CD4-positive, alpha-beta memory T cell (primary cell): ENCODE measurements at regions of chr12 and their contacts with region 1.

Region 1: DNA sequence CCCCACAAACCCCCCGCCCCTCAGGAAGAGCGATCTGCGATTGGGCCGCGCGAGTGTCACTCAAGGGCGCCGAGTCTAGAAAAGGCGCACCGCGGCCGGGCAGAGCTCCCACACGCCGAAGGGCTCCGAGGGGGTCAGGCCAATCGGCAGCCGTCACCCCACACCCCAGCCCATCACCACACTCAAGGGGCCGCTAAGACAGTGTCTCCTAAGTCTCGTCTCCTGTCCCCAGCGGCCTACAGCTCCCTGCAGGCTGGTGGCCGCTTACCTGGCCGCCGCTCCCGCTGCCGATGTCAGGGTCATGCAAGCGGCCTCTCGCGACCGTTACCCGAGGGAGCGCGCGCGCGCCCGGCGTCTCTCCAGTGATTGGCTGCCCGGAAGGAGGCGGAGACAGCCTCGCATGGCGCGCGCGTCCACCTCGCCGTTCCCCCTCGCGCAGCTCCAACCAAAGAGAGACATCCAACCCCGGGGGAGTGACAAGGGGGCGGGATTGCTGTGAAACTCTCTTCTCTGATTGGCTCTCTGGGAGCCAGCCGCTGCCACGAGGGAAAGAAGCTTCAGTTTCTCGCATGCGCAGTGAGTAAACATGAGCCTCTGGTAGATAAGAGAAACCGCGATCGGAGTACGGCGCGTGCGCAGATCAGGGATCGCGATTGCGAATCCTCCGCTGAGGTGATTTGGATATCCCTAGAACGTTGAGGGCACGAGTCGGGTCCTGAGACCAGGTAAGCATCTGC is at the starts of genes MPHOSPH9 and MTRFR:
- DNase-seq: peak; percentile 99 to 100 (median 100)
- H3K4me3 ChIP-seq: peak within 1 kb of the TSS; percentile 82 to 99
- H3K4me3 Mint-ChIP-seq: peak within 1 kb of the TSS; percentile 96 to 100 (median 99)
- H3K27ac ChIP-seq: peak within 1 kb of the TSS; percentile 88
- H3K27ac Mint-ChIP-seq: peak within 1 kb of the TSS; percentile 96 to 100 (median 99)
- H3K4me1 ChIP-seq: peaks cover 86% of the 10 kb centered on the region
- H3K4me1 Mint-ChIP-seq: peaks cover 40 to 81% (median 60%) of the 10 kb centered on the region in 4 donors
- H3K27me3 ChIP-seq: no peaks in the 10 kb centered on the region
- H3K27me3 Mint-ChIP-seq: no peaks in the 10 kb centered on the region
- total RNA-seq, gene MPHOSPH9: 57.9 to 62.7 TPM
- total RNA-seq, gene MTRFR: 46.1 to 48.8 TPM

Region 2: DNA sequence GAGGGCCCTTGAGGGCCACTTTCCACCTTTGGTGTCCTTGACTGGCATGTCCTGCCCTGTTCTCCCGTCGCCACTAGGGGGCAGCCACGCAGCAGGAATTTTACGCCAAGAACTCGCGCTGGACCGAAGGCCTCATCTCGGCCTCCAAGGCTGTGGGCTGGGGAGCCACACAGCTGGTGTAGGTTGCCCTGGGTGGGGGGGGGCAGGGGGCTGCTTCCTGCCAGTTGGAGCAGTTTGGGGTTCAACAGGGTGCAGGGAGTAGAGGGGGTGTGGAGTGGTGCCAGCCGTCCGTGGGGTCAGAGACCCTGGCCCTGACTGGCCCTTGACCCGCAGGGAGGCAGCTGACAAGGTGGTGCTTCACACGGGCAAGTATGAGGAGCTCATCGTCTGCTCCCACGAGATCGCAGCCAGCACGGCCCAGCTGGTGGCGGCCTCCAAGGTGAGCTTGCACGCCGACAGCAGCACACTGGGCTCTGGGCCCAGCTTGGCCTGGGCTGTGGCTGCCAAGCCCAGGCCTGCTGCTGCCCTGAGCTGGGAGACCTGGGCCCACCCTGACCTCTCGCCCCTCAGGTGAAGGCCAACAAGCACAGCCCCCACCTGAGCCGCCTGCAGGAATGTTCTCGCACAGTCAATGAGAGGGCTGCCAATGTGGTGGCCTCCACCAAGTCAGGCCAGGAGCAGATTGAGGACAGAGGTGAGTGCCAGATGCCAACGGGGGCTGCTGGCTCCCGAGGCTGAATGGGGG is 372.5 kb before region 1 on chr12:
- CTCF ChIA-PET with region 1: interaction called, 8 read pairs
- POLR2A ChIA-PET with region 1: interaction called, 5 read pairs
- intact Hi-C with region 1: loop called (anchors 1 kb)
- DNase-seq: peak; percentile 68 to 79 (median 73)
- H3K4me3 ChIP-seq: no peak overlapping the region
- H3K4me3 Mint-ChIP-seq: no peak overlapping the region
- H3K27ac ChIP-seq: no peak overlapping the region
- H3K27ac Mint-ChIP-seq: peak overlapping the region in 4 of 7 donors; percentile 10 to 71 (median 30)
- H3K4me1 ChIP-seq: peaks cover 5% of the 10 kb centered on the region
- H3K4me1 Mint-ChIP-seq: peaks cover 0 to 5% (median 0%) of the 10 kb centered on the region in 4 donors
- H3K27me3 ChIP-seq: no peaks in the 10 kb centered on the region
- H3K27me3 Mint-ChIP-seq: no peaks in the 10 kb centered on the region

Region 3: DNA sequence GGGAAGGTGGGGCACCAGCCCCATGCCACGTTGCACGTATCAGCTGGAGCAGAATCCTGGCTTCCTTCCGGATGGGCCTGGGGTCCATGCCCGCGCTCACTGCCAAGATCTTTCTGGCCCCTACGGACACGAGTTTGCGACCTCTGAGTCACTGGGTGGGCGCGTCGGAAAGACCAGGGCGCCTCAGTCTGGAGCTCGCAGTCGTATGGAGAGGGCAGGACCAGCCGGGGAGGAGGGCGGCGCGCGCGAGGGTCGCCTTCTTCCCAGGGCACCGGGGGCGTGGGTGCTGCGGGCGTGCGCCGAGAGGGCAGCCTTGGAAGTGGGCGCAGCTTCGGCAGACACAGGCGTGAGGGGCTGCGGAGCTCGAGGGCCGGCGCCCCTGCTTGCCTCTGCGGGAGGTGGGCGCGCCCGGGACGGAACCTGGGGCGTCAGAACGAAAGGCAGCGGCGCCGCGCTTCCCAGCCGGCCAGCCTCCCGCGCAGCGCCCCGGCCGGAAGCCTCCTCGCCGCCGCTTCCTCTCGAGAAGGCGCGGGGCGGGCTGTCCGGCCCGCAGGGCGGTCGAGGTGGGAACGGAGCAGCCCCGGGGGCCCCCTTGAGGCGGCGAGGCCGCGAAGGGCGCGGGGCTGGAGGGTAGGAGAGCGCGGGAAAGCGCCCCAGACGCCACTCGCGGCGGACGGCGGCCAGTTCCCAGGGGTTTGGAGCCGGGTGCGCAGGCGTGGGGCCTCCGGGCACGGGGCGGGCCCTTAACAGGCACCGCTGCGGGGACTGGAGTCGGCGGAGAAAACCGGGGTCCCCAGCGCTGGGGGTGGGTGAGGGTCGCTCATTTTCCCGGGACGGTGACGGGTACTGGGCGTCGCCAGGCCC is 252.6 kb before region 1 on chr12 and contains the start of gene ARL6IP4:
- CTCF ChIA-PET with region 1: interaction called, 10 read pairs
- POLR2A ChIA-PET with region 1: interaction called, 67 read pairs
- intact Hi-C with region 1: loop called (anchors 1 kb)
- DNase-seq: peak; percentile 56 to 71 (median 64)
- H3K4me3 ChIP-seq: peak within 1 kb of the TSS; percentile 78 to 83
- H3K4me3 Mint-ChIP-seq: peak within 1 kb of the TSS; percentile 87 to 94 (median 90)
- H3K27ac ChIP-seq: peak within 1 kb of the TSS; percentile 68
- H3K27ac Mint-ChIP-seq: peak within 1 kb of the TSS; percentile 88 to 91 (median 90)
- H3K4me1 ChIP-seq: peaks cover 77% of the 10 kb centered on the region
- H3K4me1 Mint-ChIP-seq: peaks cover 18 to 72% (median 50%) of the 10 kb centered on the region in 4 donors
- H3K27me3 ChIP-seq: no peaks in the 10 kb centered on the region
- H3K27me3 Mint-ChIP-seq: no peaks in the 10 kb centered on the region
- total RNA-seq, gene ARL6IP4: 159 to 180 TPM

Region 4: DNA sequence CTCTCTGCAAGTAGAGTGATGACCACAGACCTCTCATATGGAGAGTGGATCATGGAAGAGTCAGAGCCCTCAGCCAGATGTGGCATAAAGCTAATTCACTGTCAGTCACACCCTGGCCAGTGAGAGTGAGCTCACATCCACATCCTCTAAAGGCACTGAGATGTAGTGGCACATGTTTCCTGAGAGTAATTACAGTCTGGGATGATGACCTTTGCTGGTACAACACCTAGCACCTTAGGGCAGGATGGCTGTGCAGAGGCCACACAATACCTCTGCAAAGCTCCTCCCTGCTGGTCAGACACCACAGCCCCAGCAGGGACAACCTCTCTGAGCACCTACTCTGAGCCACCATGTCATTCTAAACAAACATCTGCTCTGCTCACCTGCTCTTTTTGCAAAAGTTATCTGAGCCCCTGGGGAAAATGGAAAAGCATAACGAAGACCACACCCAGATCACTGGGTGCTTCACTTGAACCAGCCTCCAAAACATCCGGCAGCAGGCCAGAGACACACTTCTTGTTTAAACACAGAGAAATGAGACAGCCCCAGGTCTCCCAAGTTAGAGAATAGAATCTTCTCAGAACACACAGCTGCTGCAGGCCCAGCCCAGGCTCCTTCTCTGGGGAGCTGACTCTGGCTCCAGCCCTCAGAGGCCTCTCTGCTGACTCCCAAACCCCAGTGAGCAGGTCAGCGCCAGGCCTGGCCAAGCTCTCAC is 112.4 kb before region 1 on chr12:
- CTCF ChIA-PET with region 1: interaction called, 3 read pairs
- POLR2A ChIA-PET with region 1: interaction called, 23 read pairs
- intact Hi-C with region 1: no loop called
- DNase-seq: peak in 2 of 5 donors; percentile 21 to 26
- H3K4me3 ChIP-seq: no peak overlapping the region
- H3K4me3 Mint-ChIP-seq: peak overlapping the region in 7 of 8 donors; percentile 33 to 66 (median 58)
- H3K27ac ChIP-seq: peak overlapping the region; percentile 27
- H3K27ac Mint-ChIP-seq: peak overlapping the region; percentile 82 to 89 (median 86)
- H3K4me1 ChIP-seq: peaks cover 53% of the 10 kb centered on the region
- H3K4me1 Mint-ChIP-seq: peaks cover 23 to 49% (median 38%) of the 10 kb centered on the region in 4 donors
- H3K27me3 ChIP-seq: no peaks in the 10 kb centered on the region
- H3K27me3 Mint-ChIP-seq: no peaks in the 10 kb centered on the region

Region 5: GRCh38 chr12:123365025-123365917 is 132.3 kb after region 1 on chr12:
- CTCF ChIA-PET with region 1: interaction called, 5 read pairs
- POLR2A ChIA-PET with region 1: interaction called, 25 read pairs
- intact Hi-C with region 1: loop called (anchors 1 kb)
- DNase-seq: peak; percentile 98 to 99 (median 99)
- H3K4me3 ChIP-seq: peak overlapping the region; percentile 92 to 94
- H3K4me3 Mint-ChIP-seq: peak overlapping the region; percentile 85 to 96 (median 94)
- H3K27ac ChIP-seq: peak overlapping the region; percentile 85
- H3K27ac Mint-ChIP-seq: peak overlapping the region; percentile 89 to 99 (median 97)
- H3K4me1 ChIP-seq: peaks cover 32% of the 10 kb centered on the region
- H3K4me1 Mint-ChIP-seq: peaks cover 10 to 32% (median 18%) of the 10 kb centered on the region in 4 donors
- H3K27me3 ChIP-seq: no peaks in the 10 kb centered on the region
- H3K27me3 Mint-ChIP-seq: no peaks in the 10 kb centered on the region

Region 6: DNA sequence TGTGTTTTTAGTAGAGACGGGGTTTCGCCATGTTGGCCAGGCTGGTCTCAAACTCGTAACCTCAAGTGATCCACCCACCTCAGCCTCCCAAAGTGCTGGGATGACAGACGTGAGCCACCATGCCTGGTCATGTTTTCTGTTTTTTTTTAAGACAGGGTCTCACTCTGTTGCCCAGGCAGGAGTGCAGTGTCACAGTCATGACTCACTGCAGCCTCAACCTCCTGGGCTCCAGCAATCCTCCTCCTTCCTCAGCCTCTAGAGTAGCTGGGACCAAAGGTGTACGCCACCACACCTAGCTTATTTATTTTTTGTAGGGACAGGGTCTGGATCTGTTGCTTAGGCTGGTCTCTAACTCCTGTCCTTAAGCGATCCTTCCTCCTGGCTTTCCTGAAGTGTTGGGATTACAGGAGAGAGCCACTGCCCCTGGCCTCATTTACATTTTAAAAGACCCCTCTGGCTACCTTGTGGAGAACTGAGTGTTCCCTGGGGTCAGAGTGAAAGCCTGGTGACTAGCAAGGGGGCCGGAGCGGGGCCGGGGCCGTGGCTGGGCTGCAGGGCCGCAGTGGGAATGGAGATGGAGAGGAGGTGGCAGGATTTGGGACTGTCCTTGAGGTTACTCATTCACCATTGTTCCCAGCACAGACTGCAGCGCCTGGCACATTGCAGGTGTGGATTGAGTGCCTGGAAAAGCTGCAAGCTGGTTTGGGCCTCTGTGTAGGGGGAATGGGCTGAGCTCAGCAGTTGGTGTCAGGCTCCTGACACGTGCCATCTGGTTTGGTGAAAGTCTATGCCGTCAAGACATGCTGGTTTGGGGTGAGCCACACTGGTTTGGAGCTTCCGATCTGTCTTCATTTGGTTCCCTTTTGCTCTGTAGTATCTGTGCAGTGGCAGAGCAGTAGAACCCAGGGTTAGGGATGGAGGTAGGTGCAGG is 169.0 kb after region 1 on chr12:
- CTCF ChIA-PET with region 1: no interaction called
- POLR2A ChIA-PET with region 1: no interaction called
- intact Hi-C with region 1: no loop called
- DNase-seq: no peak
- H3K4me3 ChIP-seq: no peak overlapping the region
- H3K4me3 Mint-ChIP-seq: no peak overlapping the region
- H3K27ac ChIP-seq: no peak overlapping the region
- H3K27ac Mint-ChIP-seq: peak overlapping the region in 3 of 7 donors; percentile 16 to 75 (median 19)
- H3K4me1 ChIP-seq: no peaks in the 10 kb centered on the region
- H3K4me1 Mint-ChIP-seq: peaks cover 3 to 11% (median 5%) of the 10 kb centered on the region in 4 donors
- H3K27me3 ChIP-seq: no peaks in the 10 kb centered on the region
- H3K27me3 Mint-ChIP-seq: no peaks in the 10 kb centered on the region

Region 7: GRCh38 chr12:123601602-123602489 is 368.9 kb after region 1 on chr12 and contains the start of gene DDX55:
- CTCF ChIA-PET with region 1: interaction called, 3 read pairs
- POLR2A ChIA-PET with region 1: interaction called, 16 read pairs
- intact Hi-C with region 1: no loop called
- DNase-seq: peak; percentile 84 to 87 (median 86)
- H3K4me3 ChIP-seq: peak within 1 kb of the TSS; percentile 97 to 99
- H3K4me3 Mint-ChIP-seq: peak within 1 kb of the TSS; percentile 90 to 99 (median 96)
- H3K27ac ChIP-seq: peak within 1 kb of the TSS; percentile 92
- H3K27ac Mint-ChIP-seq: peak within 1 kb of the TSS; percentile 91 to 96 (median 95)
- H3K4me1 ChIP-seq: peaks cover 27% of the 10 kb centered on the region
- H3K4me1 Mint-ChIP-seq: peaks cover 18 to 42% (median 29%) of the 10 kb centered on the region in 4 donors
- H3K27me3 ChIP-seq: no peaks in the 10 kb centered on the region
- H3K27me3 Mint-ChIP-seq: no peaks in the 10 kb centered on the region
- total RNA-seq, gene DDX55: 50.5 to 58.7 TPM